Dendritic cell treated with granulocyte-macrophage colony-stimulating factor and Interleukin-4, amounts not matched to agents 40 ng/mL and 50 ng/mL, for 4 days (primary cell): ENCODE measurements at regions of chr10 and their contacts with region 1.

Region 1: DNA sequence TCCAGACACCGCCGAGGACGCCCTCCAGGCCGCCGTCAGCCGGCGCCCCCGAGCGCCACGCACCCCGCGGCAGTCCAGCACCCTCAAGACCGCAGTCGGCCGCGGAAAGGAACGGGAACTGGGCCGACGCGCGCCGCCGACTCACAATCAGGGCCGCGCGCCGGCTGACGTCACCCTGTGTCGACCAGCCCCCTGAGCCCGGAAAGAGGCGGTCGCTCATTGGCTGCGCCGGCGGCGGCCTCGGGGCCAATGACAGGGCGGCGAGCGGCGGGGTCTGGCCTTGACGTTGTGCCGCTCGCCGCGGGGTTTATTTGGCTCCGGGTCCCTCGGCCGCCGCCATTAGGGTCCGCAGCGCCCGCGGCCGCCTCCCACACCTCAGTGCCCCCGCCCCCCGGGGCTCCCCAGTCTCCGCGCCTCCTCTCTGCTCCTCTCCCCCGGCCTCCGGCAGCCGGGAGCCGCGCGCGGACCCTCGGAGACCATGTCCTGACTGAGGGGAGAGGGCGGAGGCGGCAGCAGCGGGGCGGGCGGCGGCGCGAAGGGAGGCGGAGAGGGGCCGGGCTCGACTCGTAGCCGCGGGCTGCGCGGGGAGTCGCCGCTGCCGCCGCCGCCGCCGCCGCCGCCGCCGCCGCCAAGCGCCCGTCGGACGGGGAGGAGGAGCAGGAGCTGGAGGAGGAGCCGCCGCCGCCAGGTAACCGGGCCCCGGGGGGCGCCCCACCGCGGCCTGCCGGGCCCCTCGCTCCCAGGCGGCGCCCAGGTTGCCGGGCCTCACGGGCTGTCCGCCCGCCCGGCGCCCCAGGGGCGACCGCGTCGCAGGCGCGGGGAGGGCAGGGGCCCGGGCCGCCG is 25.1 kb upstream of the ZRANB1 start:
- H3K4me3 Mint-ChIP-seq: peak overlapping the region; percentile 76
- H3K27ac Mint-ChIP-seq: peak overlapping the region; percentile 91
- H3K4me1 Mint-ChIP-seq: peaks cover 54% of the 10 kb centered on the region
- H3K27me3 Mint-ChIP-seq: no peaks in the 10 kb centered on the region

Region 2: GRCh38 chr10:124530215-124530665 is 386.6 kb before region 1 on chr10:
- intact Hi-C with region 1: loop called (anchors 10 kb)
- H3K4me3 Mint-ChIP-seq: no peak overlapping the region
- H3K27ac Mint-ChIP-seq: no peak overlapping the region
- H3K4me1 Mint-ChIP-seq: peaks cover 20% of the 10 kb centered on the region
- H3K27me3 Mint-ChIP-seq: no peaks in the 10 kb centered on the region

Region 3: GRCh38 chr10:124791378-124792348 is 125.1 kb before region 1 on chr10 and contains the start of gene EEF1AKMT2:
- intact Hi-C with region 1: loop called (anchors 5 kb)
- H3K4me3 Mint-ChIP-seq: peak within 1 kb of the TSS; percentile 92
- H3K27ac Mint-ChIP-seq: peak within 1 kb of the TSS; percentile 98
- H3K4me1 Mint-ChIP-seq: peaks cover 17% of the 10 kb centered on the region
- H3K27me3 Mint-ChIP-seq: peaks cover 3% of the 10 kb centered on the region

Region 4: DNA sequence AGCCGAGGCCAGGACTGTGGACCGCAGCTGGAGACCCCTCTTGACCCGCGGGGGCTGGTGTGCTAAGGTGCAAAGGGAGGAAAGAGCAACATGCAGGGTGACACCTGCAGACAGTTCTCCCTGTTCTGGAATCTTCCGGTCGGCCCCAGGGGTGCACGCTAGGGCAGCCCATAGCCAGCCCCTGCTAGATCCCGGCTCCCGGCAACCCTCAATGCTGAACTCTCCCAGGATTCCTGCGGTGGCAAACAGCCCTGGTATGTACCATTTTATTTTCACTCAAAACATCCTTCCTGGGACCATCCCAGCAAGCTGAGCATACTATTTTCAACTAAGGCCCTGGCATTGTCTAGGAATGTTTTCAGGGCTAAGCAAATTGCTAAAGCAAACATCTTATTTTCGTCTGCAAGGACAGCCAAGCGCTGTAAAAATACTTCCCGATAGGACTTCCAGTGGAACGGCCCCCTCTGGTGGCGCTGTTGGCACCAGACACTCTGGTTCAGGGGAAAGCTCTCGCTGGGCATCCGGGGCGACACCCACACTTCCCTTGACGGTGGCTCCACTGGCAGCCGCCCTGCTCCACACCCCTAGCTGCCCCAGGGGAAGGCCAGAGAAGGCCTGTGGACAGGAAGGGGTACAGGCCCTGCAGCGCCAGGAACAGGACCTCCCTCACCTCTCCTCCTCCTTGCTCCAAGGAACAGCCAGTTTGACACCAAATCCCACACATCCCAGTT is 144.2 kb after region 1 on chr10:
- intact Hi-C with region 1: loop called (anchors 5 kb)
- H3K4me3 Mint-ChIP-seq: no peak overlapping the region
- H3K27ac Mint-ChIP-seq: peak overlapping the region; percentile 75
- H3K4me1 Mint-ChIP-seq: peaks cover 91% of the 10 kb centered on the region
- H3K27me3 Mint-ChIP-seq: no peaks in the 10 kb centered on the region